ENCODE measurements at regions of chr10 and their contacts with region 1.

Region 1: GRCh38 chr10:4849555-4850242 is 23.7 kb downstream of the AKR1E2 start:
- DNase-seq: peak; percentile 90
- H3K4me3 Mint-ChIP-seq: no peak overlapping the region
- H3K27ac Mint-ChIP-seq: peak overlapping the region; percentile 44
- H3K4me1 Mint-ChIP-seq: peaks cover 15% of the 10 kb centered on the region
- H3K27me3 Mint-ChIP-seq: no peaks in the 10 kb centered on the region

Region 2: DNA sequence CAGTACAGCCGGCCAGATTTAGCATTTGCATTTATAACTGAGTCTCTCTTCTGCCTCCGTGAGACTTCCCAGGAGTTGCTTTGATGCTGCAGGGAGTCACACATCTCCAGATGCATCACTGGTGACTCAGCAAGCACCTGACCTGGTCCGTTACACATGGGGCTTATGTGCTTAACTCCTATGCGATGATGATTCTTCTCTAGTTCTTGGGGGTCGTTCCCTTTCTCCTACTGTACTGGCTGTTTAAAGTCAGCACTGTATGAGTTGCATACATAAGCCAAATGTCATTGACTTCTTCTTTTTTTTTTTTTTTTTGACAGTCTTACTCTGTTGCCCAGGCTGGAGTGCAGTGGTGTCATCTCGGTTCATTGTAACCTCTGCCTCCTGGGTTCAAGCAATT is 36.7 kb before region 1 on chr10:
- CTCF ChIA-PET with region 1: interaction called, 14 read pairs
- POLR2A ChIA-PET with region 1: no interaction called
- DNase-seq: no peak
- H3K4me3 Mint-ChIP-seq: no peak overlapping the region
- H3K27ac Mint-ChIP-seq: no peak overlapping the region
- H3K4me1 Mint-ChIP-seq: no peaks in the 10 kb centered on the region
- H3K27me3 Mint-ChIP-seq: peaks cover 7% of the 10 kb centered on the region

Region 3: GRCh38 chr10:4839401-4839800 is 10.3 kb before region 1 on chr10:
- CTCF ChIA-PET with region 1: interaction called, 46 read pairs
- POLR2A ChIA-PET with region 1: no interaction called
- DNase-seq: no peak
- H3K4me3 Mint-ChIP-seq: no peak overlapping the region
- H3K27ac Mint-ChIP-seq: no peak overlapping the region
- H3K4me1 Mint-ChIP-seq: peaks cover 29% of the 10 kb centered on the region
- H3K27me3 Mint-ChIP-seq: no peaks in the 10 kb centered on the region

Region 4: DNA sequence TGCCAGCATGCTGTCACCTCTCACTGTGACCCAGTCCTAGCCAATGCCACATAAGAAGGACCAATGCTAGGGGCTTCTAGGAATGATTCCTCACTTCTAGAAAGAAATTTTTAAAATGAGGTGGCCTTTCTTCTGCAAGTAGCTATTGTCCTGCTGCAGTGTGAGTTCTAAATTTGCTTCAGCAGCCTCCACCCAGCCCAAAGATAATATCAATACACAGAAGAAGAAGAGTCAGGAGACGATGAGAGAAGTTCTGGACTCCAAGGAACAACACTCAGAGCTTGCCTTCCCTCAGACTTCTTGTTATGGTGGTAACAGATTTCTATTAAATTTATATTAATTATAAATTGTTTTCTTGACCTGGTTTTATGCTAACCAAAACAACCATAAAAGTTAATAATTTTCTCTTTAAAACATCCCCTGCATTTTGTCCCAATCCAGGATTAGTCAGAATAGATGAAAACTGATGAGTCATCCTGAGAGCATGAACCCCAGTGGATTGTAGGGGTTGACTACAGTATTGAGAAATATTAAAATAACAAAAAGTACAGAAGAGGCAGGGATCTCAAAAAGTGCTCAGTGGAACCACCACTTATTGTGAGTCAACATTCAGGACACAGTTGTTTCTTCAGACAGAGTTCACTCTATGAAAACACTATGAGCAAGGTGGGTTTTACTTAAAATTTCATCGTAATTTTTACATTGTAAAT is 183.5 kb after region 1 on chr10:
- CTCF ChIA-PET with region 1: no interaction called
- POLR2A ChIA-PET with region 1: no interaction called
- DNase-seq: no peak
- H3K4me3 Mint-ChIP-seq: no peak overlapping the region
- H3K27ac Mint-ChIP-seq: no peak overlapping the region
- H3K4me1 Mint-ChIP-seq: no peaks in the 10 kb centered on the region
- H3K27me3 Mint-ChIP-seq: peaks cover 6% of the 10 kb centered on the region

Region 5: DNA sequence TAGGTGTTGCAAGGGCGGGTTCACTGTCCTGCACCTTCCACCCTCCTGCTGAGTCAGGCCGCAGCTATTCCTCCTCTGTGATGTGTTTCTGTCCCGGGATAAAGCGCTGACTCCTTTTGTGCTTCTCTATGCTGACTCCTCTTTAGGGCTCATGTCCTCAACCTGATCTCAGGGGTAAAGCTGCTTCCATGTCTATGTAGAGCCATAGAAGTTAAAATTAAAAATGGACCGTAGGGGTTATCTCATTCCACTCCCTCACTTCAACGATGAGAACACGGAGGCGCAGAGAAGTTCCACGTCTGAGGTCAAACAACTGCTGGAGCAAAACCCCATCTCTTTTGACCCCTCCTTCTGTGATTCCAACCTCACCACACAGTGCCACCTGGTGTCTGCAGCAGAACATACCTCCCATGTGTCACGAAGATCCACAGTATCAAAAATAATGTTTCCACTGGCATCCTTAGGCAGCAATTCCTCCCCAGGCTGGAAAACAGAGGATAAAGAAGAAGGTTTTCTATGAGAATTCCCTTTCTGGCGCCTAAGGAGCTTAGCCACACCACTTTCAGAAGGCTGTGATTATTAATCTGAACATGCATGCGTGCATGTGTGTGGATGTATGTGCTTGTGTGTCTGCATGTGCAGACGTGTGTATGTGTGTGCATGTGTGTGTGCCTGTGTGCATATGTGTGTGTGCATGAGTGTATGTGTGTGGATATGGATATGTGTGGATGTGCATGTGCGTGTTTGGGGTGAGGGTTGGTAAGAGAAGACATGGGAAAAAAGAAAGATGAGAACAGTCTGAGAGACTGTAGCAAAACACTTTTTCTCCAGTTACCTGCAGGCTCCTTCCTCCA is 433.8 kb after region 1 on chr10:
- CTCF ChIA-PET with region 1: interaction called, 17 read pairs
- POLR2A ChIA-PET with region 1: no interaction called
- DNase-seq: peak; percentile 72
- H3K4me3 Mint-ChIP-seq: no peak overlapping the region
- H3K27ac Mint-ChIP-seq: peak overlapping the region; percentile 84
- H3K4me1 Mint-ChIP-seq: peaks cover 36% of the 10 kb centered on the region
- H3K27me3 Mint-ChIP-seq: peaks cover 14% of the 10 kb centered on the region

Region 6: DNA sequence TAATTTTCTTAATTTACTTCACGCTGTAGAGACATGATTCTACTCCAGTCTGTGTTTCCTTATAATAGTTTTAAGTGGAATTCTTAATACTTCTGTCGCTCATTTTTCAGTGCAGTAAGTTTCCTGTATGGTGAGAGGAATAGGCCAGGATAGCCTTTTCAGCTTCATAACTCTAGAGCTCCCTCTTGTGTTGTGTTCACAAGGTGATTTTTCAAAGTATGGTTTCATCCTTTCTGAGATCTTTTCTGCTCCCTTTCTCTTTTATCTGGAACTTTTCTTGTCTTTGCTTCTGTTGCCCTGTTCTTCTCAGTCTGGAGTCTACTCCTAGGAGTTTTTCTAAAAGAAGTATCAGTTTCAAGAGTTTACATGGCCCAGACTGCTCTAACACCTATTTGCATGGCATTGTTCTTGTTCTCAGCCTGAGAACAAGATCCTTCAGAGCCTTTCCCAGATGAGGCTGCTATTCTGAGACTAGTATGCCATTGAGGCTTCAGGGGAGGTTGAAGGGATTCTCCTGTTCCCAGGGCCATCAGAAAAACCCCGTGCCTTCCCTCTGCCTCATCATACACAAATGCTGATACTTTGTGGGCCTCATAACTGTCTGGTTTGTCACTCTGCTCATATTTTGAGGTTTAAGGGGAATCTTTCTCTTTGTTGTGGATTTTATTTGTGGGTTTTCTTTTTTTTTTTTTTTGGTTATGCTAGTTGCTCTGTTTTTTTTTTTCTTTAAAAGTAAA is 584.5 kb after region 1 on chr10:
- CTCF ChIA-PET with region 1: interaction called, 25 read pairs
- POLR2A ChIA-PET with region 1: no interaction called
- DNase-seq: peak; percentile 36
- H3K4me3 Mint-ChIP-seq: no peak overlapping the region
- H3K27ac Mint-ChIP-seq: peak overlapping the region; percentile 14
- H3K4me1 Mint-ChIP-seq: peaks cover 12% of the 10 kb centered on the region
- H3K27me3 Mint-ChIP-seq: no peaks in the 10 kb centered on the region